ENCODE measurements at regions of chr6 and their contacts with region 1.

Region 1: GRCh38 chr6:119105282-119105681 is 26.8 kb upstream of the FAM184A start:
- DNase-seq: no peak
- ATAC-seq: no peak

Region 2: DNA sequence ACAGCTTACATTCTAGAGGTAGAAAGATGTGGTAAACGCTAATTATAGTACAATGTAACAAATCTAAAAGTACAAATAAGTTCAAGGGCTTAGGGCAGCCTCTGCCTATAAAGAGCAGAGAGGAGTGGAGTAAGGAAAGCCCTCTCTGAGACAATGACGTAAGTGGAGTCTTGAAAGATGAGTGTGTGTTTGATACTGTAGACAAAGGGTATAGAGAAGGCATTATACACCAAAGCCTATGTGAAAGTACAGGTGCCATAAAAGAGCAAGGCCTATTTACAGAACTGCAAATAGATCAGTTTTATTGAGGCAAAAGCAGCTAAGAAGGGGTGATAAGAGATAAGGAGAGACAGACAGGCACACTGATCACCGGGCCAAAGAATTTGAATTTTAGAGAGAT is 1513.9 kb before region 1 on chr6:
- intact Hi-C with region 1: loop called (anchors 5 kb)
- DNase-seq: no peak
- ATAC-seq: no peak

Measured in sciatic nerve (tissue), 2 donors.